ENCODE measurements at regions of chr1 and their contacts with region 1.

Region 1: DNA sequence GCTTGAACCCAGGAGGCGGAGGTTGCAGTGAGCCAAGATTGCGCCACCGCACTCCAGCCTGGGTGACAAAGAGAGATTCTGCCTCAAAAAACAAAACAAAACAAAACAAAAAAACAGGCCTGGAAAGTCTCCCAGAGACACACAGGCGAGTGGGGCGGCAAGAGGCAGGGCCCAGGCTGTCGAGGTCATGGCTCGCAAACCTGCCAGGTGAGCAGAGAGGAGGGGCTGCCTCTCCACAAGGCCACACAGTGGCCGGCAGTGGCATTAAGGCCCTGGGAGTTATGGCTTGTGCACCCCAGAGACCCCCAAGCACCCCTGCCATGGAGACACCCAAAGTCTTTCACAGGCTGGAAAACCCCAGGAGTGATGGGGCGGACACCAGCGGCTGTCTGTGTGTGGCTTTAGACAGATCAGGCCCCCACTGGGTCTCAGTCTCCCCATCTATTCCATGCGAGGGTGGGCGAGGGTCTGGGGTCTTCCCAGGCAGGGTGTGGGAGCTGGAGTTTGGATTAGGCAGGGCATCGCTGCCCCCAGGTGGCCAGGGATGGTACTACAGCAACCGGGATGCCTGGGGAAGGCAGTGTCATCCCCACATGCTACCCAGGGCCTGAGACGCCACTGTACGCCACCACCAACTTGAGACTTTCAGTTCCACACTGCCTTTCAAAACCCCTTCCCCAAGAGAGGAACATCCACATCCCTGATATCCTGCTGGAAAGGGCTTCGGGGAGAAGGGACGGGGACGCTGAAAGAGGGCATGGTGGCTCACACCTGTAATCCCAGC is 7.3 kb upstream of the CTRC start:
- DNase-seq: peak; percentile 60 to 76 (median 68)
- H3K4me3 ChIP-seq: no peak overlapping the region
- H3K4me3 Mint-ChIP-seq: no peak overlapping the region
- H3K27ac ChIP-seq: no peak overlapping the region
- H3K27ac Mint-ChIP-seq: peak overlapping the region in 6 of 8 donors; percentile 15 to 76 (median 46)
- H3K4me1 ChIP-seq: no peaks in the 10 kb centered on the region
- H3K4me1 Mint-ChIP-seq: peaks cover 0 to 11% (median 9%) of the 10 kb centered on the region in 3 donors
- H3K27me3 ChIP-seq: no peaks in the 10 kb centered on the region
- H3K27me3 Mint-ChIP-seq: peaks cover 0 to 1% of the 10 kb centered on the region in 2 donors

Region 2: DNA sequence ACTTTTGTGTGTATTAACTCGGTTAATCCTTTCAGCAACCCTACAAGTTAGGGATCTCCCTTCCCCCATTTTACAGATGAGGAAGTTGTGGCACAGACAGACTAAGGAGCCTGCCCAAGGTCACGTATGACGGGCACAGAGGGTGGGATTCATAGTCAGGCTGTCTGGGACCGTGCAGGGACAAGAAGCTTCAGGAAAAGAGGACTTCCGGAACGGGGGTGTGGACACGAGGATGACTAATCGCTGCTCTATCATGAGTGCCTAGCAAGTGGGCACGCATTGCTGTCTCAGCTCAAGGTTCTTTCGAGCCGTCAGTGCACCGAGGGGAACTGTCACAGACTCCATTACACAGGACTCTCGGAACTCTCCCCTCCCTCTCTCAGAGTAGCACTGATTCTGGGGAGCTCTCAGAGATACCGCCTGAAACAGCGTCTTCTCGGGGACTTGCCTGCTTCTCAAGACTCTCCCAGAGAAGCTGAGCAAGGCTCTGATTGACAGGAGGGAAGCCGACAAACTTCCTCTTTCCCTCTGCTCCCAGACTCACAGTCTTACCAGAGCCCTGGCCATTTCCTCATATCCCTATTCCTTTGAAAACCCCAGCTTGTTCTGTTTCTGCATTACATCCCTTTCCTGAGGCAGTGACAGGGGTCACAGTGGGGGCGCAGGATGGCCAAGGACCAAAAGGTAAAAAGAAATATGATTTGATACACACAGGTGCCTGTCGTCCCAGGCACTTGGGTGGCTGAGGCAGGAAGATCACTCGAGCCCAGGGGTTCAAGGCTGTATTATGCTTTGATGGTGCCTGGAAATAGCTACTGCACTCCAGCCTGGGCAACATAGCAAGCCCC is 169.6 kb before region 1 on chr1:
- CTCF ChIA-PET with region 1: no interaction called
- POLR2A ChIA-PET with region 1: no interaction called
- DNase-seq: no peak
- H3K4me3 ChIP-seq: no peak overlapping the region
- H3K4me3 Mint-ChIP-seq: peak overlapping the region in 5 of 7 donors; percentile 10 to 71 (median 61)
- H3K27ac ChIP-seq: no peak overlapping the region
- H3K27ac Mint-ChIP-seq: peak overlapping the region in 2 of 8 donors; percentile 36 to 43
- H3K4me1 ChIP-seq: no peaks in the 10 kb centered on the region
- H3K4me1 Mint-ChIP-seq: peaks cover 12 to 17% (median 15%) of the 10 kb centered on the region in 3 donors
- H3K27me3 ChIP-seq: peaks cover 7% of the 10 kb centered on the region
- H3K27me3 Mint-ChIP-seq: peaks cover 24 to 45% of the 10 kb centered on the region in 2 donors

Region 3: GRCh38 chr1:15323351-15323988 is 107.5 kb before region 1 on chr1:
- CTCF ChIA-PET with region 1: interaction called, 98 read pairs
- POLR2A ChIA-PET with region 1: no interaction called
- DNase-seq: peak; percentile 58 to 80 (median 62)
- H3K4me3 ChIP-seq: no peak overlapping the region
- H3K4me3 Mint-ChIP-seq: no peak overlapping the region
- H3K27ac ChIP-seq: no peak overlapping the region
- H3K27ac Mint-ChIP-seq: peak overlapping the region in 3 of 8 donors; percentile 8 to 81 (median 23)
- H3K4me1 ChIP-seq: no peaks in the 10 kb centered on the region
- H3K4me1 Mint-ChIP-seq: peaks cover 3 to 8% (median 5%) of the 10 kb centered on the region in 3 donors
- H3K27me3 ChIP-seq: no peaks in the 10 kb centered on the region
- H3K27me3 Mint-ChIP-seq: peaks cover 4 to 6% of the 10 kb centered on the region in 2 donors

Region 4: DNA sequence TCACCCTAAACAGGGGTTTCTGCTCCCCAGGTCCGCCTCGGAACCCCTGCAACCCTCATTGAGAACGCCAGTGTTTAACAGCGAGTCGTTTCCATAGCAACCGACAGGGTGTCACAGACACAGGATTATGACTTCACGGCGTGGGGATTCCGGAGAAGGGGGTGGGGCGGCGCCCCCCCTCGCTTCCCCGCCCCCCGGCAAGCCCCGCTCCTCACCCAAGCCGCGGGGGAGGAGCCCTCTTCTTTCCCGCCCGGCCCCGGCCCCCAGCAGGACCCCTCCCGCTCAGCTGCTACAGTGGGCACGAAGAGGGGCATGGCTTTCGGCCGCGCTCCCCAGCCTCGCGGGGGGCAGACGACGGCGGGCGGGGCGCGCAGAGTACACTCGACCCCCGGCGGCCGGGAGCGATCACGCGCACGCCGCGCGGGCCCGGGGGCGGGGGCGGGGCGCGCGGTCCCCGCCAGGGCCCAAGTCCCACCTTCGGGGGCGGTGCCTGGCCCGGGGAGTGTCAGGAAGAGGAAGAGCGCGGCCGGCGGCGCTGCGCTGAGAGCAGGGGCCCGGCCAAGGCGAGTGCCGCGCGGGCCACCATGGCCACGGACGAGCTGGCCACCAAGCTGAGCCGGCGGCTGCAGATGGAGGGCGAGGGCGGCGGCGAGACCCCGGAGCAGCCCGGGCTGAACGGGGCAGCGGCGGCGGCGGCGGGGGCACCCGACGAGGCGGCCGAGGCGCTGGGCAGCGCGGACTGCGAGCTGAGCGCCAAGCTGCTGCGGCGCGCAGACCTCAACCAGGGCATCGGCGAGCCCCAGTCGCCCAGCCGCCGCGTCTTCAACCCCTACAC is 21.4 kb before region 1 on chr1 and contains the start of gene EFHD2:
- CTCF ChIA-PET with region 1: interaction called, 18 read pairs
- POLR2A ChIA-PET with region 1: no interaction called
- DNase-seq: peak; percentile 83 to 95 (median 87)
- H3K4me3 ChIP-seq: peak within 1 kb of the TSS; percentile 80
- H3K4me3 Mint-ChIP-seq: peak within 1 kb of the TSS; percentile 91 to 99 (median 94)
- H3K27ac ChIP-seq: peak within 1 kb of the TSS; percentile 90
- H3K27ac Mint-ChIP-seq: peak within 1 kb of the TSS; percentile 97 to 99 (median 99)
- H3K4me1 ChIP-seq: peaks cover 50% of the 10 kb centered on the region
- H3K4me1 Mint-ChIP-seq: peaks cover 69 to 71% (median 71%) of the 10 kb centered on the region in 3 donors
- H3K27me3 ChIP-seq: no peaks in the 10 kb centered on the region
- H3K27me3 Mint-ChIP-seq: no peaks in the 10 kb centered on the region
- total RNA-seq, gene EFHD2: 64.7 to 67.9 TPM

Measured in CD8-positive, alpha-beta memory T cell (primary cell).